Caco-2 (cell line): ENCODE measurements at regions of chr3 and their contacts with region 1.

Region 1: DNA sequence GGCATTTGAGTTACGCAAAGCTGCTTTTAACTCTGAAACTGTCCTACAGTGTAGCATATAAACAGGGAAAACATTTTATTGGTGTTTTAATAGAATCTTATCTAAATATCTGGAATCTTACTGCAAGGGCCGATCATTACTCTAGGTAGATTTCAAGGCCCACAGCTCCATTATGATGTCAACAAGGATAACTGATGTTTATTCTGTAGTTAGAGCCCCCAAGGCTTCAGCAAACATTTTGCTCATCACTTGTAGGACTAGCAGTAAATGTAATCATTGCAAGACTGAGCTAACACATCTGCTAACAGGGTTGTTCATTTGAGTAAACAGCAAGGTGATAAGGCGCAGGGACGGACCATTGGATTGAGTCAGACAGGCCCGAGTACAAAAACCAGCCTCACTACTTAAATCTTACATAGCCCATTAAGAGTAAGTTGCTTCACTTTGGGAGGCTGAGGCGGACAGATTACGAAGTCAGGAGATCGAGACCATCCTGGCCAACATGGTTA is 332.5 kb upstream of the TPRG1 start:
- DNase-seq: peak; percentile 86 to 90
- H3K4me3 ChIP-seq: no peak overlapping the region
- H3K4me3 Mint-ChIP-seq: no peak overlapping the region
- H3K27ac Mint-ChIP-seq: peak overlapping the region; percentile 75
- H3K4me1 ChIP-seq: peaks cover 12% of the 10 kb centered on the region
- H3K4me1 Mint-ChIP-seq: peaks cover 22% of the 10 kb centered on the region
- H3K27me3 ChIP-seq: no peaks in the 10 kb centered on the region
- H3K27me3 Mint-ChIP-seq: no peaks in the 10 kb centered on the region
- CTCF ChIP-seq: no peak

Region 2: DNA sequence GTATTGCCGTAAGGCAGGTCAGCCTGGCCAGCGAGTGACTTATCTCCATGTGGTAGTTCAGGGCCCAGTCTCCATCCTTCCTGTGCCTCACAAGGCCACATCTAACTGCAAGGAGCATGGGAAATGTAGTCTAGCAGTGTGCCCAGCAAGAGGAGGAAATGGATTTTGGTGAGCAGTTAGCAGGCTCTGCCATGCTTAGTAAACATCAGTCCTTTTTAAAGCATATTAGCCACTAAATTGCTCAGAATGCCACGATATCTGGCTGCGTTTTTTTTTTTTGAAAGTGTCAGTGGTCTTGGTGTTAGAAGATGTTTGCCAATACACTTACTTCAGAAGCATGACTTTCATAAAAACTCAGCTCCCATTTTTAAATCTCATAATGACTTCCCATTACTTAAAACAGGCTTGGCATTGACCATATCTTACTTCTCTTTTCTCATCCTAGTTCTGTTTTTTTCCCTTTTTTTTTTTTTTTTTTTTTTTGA is 137.7 kb before region 1 on chr3:
- CTCF ChIA-PET with region 1: no interaction called
- POLR2A ChIA-PET with region 1: no interaction called
- intact Hi-C with region 1: no loop called
- DNase-seq: no peak
- H3K4me3 ChIP-seq: no peak overlapping the region
- H3K4me3 Mint-ChIP-seq: no peak overlapping the region
- H3K27ac Mint-ChIP-seq: no peak overlapping the region
- H3K4me1 ChIP-seq: no peaks in the 10 kb centered on the region
- H3K4me1 Mint-ChIP-seq: peaks cover under 1% of the 10 kb centered on the region
- H3K27me3 ChIP-seq: no peaks in the 10 kb centered on the region; the same call in 1 of the 2 replicates
- H3K27me3 Mint-ChIP-seq: no peaks in the 10 kb centered on the region
- CTCF ChIP-seq: no peak

Region 3: GRCh38 chr3:188817103-188817936 is 21.9 kb before region 1 on chr3:
- CTCF ChIA-PET with region 1: no interaction called
- POLR2A ChIA-PET with region 1: no interaction called
- intact Hi-C with region 1: loop called (anchors 1 kb)
- DNase-seq: peak in 1 of 2 experiments; percentile 58
- H3K4me3 ChIP-seq: no peak overlapping the region
- H3K4me3 Mint-ChIP-seq: peak overlapping the region; percentile 60
- H3K27ac Mint-ChIP-seq: peak overlapping the region; percentile 39
- H3K4me1 ChIP-seq: peaks cover 26% of the 10 kb centered on the region
- H3K4me1 Mint-ChIP-seq: peaks cover 30% of the 10 kb centered on the region
- H3K27me3 ChIP-seq: no peaks in the 10 kb centered on the region
- H3K27me3 Mint-ChIP-seq: no peaks in the 10 kb centered on the region
- CTCF ChIP-seq: no peak

Region 4: DNA sequence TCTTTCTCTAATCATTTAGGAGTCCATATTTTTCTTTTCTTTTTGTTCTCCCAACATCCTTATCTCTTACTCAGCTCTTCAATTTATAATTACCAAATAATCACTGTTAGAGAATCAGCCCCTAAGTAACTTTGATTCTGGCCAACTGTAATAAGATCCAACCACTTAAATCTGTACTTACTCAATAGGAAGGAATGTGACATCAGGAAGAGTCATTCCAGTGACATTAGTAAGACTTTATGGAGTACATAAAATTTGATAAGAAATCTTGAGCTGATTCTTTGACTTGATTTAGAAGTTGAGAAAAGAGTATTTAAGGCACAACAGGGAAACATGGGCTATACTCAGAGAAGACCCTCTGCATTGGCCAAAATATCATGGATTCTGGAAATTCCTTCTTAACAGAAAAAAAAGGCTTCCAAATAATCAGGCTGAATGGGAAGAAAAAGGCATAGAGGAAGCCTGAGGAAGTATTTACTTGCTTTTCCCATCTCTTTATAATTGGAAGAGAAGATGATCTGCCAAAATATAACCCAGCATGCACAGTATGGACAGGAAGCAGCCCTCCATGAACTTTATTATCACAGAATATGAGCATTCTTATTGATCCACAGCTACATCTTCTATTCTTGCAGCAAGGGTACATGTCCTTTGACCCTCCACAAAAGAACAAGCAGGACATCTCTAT is 42.9 kb after region 1 on chr3:
- CTCF ChIA-PET with region 1: no interaction called
- POLR2A ChIA-PET with region 1: no interaction called
- intact Hi-C with region 1: loop called (anchors 1 kb)
- DNase-seq: no peak
- H3K4me3 ChIP-seq: no peak overlapping the region
- H3K4me3 Mint-ChIP-seq: no peak overlapping the region
- H3K27ac Mint-ChIP-seq: peak overlapping the region; percentile 84
- H3K4me1 ChIP-seq: peaks cover 14% of the 10 kb centered on the region
- H3K4me1 Mint-ChIP-seq: peaks cover 14% of the 10 kb centered on the region
- H3K27me3 ChIP-seq: no peaks in the 10 kb centered on the region
- H3K27me3 Mint-ChIP-seq: no peaks in the 10 kb centered on the region
- CTCF ChIP-seq: no peak

Region 5: DNA sequence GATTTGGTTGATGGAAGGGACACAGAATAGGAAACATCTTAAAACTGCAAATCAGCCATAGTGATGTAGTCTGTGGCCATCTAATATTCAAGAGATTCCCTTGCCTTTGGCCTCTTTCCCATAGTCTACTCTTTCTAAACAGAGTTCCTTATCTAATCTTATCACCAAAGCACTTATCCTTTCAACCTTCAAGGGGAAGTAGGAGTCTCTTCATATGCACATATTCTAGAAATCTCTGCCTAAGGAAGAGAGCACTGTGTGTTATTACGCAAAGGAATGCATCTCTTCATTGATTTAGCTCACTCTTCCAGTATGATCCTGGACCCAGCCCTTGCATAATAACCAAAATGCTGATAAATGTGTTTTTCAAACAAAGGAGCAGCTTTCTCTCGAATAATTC is 78.8 kb after region 1 on chr3:
- CTCF ChIA-PET with region 1: no interaction called
- POLR2A ChIA-PET with region 1: no interaction called
- intact Hi-C with region 1: loop called (anchors 1 kb)
- DNase-seq: peak; percentile 47 to 74
- H3K4me3 ChIP-seq: no peak overlapping the region
- H3K4me3 Mint-ChIP-seq: peak overlapping the region; percentile 46
- H3K27ac Mint-ChIP-seq: peak overlapping the region; percentile 62
- H3K4me1 ChIP-seq: peaks cover 37% of the 10 kb centered on the region
- H3K4me1 Mint-ChIP-seq: peaks cover 42% of the 10 kb centered on the region
- H3K27me3 ChIP-seq: no peaks in the 10 kb centered on the region
- H3K27me3 Mint-ChIP-seq: no peaks in the 10 kb centered on the region
- CTCF ChIP-seq: no peak

Region 6: GRCh38 chr3:188940573-188940932 is 101.3 kb after region 1 on chr3:
- CTCF ChIA-PET with region 1: no interaction called
- POLR2A ChIA-PET with region 1: no interaction called
- intact Hi-C with region 1: no loop called
- DNase-seq: no peak
- H3K4me3 ChIP-seq: no peak overlapping the region
- H3K4me3 Mint-ChIP-seq: no peak overlapping the region
- H3K27ac Mint-ChIP-seq: no peak overlapping the region
- H3K4me1 ChIP-seq: peaks cover 19% of the 10 kb centered on the region
- H3K4me1 Mint-ChIP-seq: peaks cover 16% of the 10 kb centered on the region
- H3K27me3 ChIP-seq: no peaks in the 10 kb centered on the region
- H3K27me3 Mint-ChIP-seq: no peaks in the 10 kb centered on the region
- CTCF ChIP-seq: no peak